WTC11 (cell line): ENCODE measurements at regions of chr22 and their contacts with region 1.

Region 1: GRCh38 chr22:39471381-39472141 is 14.7 kb downstream of the MGAT3 start:
- DNase-seq: no peak
- ATAC-seq: peak; percentile 14
- H3K4me3 Mint-ChIP-seq: no peak overlapping the region
- H3K27ac Mint-ChIP-seq: peak overlapping the region; percentile 85
- H3K4me1 Mint-ChIP-seq: peaks cover 68% of the 10 kb centered on the region
- H3K27me3 Mint-ChIP-seq: no peaks in the 10 kb centered on the region
- CTCF ChIP-seq: no peak

Region 2: DNA sequence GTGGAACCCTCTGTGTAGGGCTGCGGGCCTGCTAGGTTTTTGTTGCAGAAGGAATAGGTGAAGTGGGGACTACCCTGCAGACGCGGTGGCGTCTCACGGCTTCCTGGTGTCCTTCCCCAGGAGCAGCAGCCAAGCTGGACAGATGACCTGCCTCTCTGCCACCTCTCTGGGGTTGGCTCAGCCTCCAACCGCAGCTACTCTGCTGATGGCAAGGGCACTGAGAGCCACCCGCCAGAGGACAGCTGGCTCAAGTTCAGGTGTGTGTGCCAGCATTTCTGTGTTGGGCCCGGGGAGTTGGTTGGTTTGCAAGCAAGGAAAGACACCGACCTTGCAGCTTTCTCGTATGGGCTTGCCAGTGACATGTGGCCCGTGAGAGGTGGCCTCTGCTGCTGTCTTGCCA is 56.7 kb before region 1 on chr22:
- CTCF ChIA-PET with region 1: no interaction called
- POLR2A ChIA-PET with region 1: no interaction called
- DNase-seq: no peak
- ATAC-seq: no peak
- H3K4me3 Mint-ChIP-seq: no peak overlapping the region
- H3K27ac Mint-ChIP-seq: no peak overlapping the region
- H3K4me1 Mint-ChIP-seq: no peaks in the 10 kb centered on the region
- H3K27me3 Mint-ChIP-seq: no peaks in the 10 kb centered on the region
- CTCF ChIP-seq: no peak

Region 3: GRCh38 chr22:40345801-40346177 is 874.2 kb after region 1 on chr22:
- CTCF ChIA-PET with region 1: no interaction called
- POLR2A ChIA-PET with region 1: interaction called, 16 read pairs
- DNase-seq: peak; percentile 38
- ATAC-seq: peak; percentile 3; the same call in 1 of the 2 replicates
- H3K4me3 Mint-ChIP-seq: peak overlapping the region; percentile 96
- H3K27ac Mint-ChIP-seq: peak overlapping the region; percentile 97
- H3K4me1 Mint-ChIP-seq: peaks cover 12% of the 10 kb centered on the region
- H3K27me3 Mint-ChIP-seq: no peaks in the 10 kb centered on the region
- CTCF ChIP-seq: no peak